Posterior vena cava (tissue), 2 donors: ENCODE measurements at regions of chr15 and their contacts with region 1.

Region 1: GRCh38 chr15:101031213-101031612 is 112.1 kb downstream of the LRRK1 start:
- DNase-seq: peak; percentile 30

Region 2: GRCh38 chr15:99424978-99425656 is 1606.1 kb before region 1 on chr15:
- intact Hi-C with region 1: loop called in 1 of 2 experiments (anchors 5 kb)
- DNase-seq: peak; percentile 82